ENCODE measurements at regions of chr5 and their contacts with region 1.

Region 1: GRCh38 chr5:145056805-145057204 is 778.3 kb downstream of the PRELID2 start:
- DNase-seq: no peak
- ATAC-seq: no peak
- H3K4me3 ChIP-seq: no peak overlapping the region
- H3K27ac ChIP-seq: no peak overlapping the region
- H3K4me1 ChIP-seq: no peaks in the 10 kb centered on the region
- H3K27me3 ChIP-seq: no peaks in the 10 kb centered on the region

Region 2: DNA sequence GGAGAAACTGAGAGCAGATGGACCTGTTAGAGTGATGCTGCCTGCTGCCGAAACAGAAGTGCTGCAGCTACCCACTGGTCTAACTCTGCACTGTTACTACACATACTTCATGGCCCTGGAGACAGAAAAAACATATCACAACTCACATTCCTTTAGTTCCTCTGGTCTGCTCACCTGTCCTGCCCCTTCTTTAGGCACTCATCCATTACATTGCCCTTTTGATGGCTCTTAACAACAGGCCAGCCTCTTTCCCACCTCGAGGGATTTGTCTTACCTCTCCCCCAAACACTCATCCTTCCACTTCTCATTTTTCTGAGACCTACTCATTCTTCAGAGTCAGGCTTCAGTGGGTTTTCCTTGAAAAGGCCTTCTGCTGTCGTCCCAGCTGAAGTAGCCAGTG is 836.9 kb before region 1 on chr5:
- intact Hi-C with region 1: loop called in 1 of 4 experiments (anchors 10 kb)
- DNase-seq: no peak
- ATAC-seq: no peak
- H3K4me3 ChIP-seq: no peak overlapping the region
- H3K27ac ChIP-seq: no peak overlapping the region
- H3K4me1 ChIP-seq: no peaks in the 10 kb centered on the region
- H3K27me3 ChIP-seq: no peaks in the 10 kb centered on the region

Region 3: GRCh38 chr5:145393426-145393825 is 336.6 kb after region 1 on chr5:
- intact Hi-C with region 1: no loop called
- DNase-seq: no peak
- ATAC-seq: no peak
- H3K4me3 ChIP-seq: no peak overlapping the region
- H3K27ac ChIP-seq: no peak overlapping the region
- H3K4me1 ChIP-seq: no peaks in the 10 kb centered on the region
- H3K27me3 ChIP-seq: no peaks in the 10 kb centered on the region